Activated B cell treated with CpG ODN at 0.5 μM for 24 hours (primary cell): ENCODE measurements at regions of chr7 and their contacts with region 1.

Region 1: GRCh38 chr7:114334989-114335388 is 79.6 kb upstream of the FOXP2 start:
- DNase-seq: no peak
- ATAC-seq: no peak
- H3K4me3 Mint-ChIP-seq: no peak overlapping the region
- H3K27ac Mint-ChIP-seq: no peak overlapping the region
- H3K4me1 Mint-ChIP-seq: no peaks in the 10 kb centered on the region
- H3K27me3 Mint-ChIP-seq: no peaks in the 10 kb centered on the region
- CTCF ChIP-seq: no peak

Region 2: GRCh38 chr7:114345494-114345893 is 10.5 kb after region 1 on chr7:
- CTCF ChIA-PET with region 1: no interaction called
- POLR2A ChIA-PET with region 1: no interaction called
- intact Hi-C with region 1: loop called (anchors 1 kb)
- DNase-seq: no peak
- ATAC-seq: no peak
- H3K4me3 Mint-ChIP-seq: no peak overlapping the region
- H3K27ac Mint-ChIP-seq: no peak overlapping the region
- H3K4me1 Mint-ChIP-seq: no peaks in the 10 kb centered on the region
- H3K27me3 Mint-ChIP-seq: no peaks in the 10 kb centered on the region
- CTCF ChIP-seq: no peak